Right ventricle myocardium superior (tissue), 1 donor: ENCODE measurements at regions of chr2 and their contacts with region 1.

Region 1: GRCh38 chr2:20635675-20636584 is 15.0 kb downstream of the HS1BP3 start:
- DNase-seq: peak; percentile 92
- ATAC-seq: peak; percentile 88

Region 2: GRCh38 chr2:20444161-20444992 is 191.6 kb before region 1 on chr2:
- intact Hi-C with region 1: loop called (anchors 2 kb)
- DNase-seq: no peak
- ATAC-seq: no peak

Region 3: DNA sequence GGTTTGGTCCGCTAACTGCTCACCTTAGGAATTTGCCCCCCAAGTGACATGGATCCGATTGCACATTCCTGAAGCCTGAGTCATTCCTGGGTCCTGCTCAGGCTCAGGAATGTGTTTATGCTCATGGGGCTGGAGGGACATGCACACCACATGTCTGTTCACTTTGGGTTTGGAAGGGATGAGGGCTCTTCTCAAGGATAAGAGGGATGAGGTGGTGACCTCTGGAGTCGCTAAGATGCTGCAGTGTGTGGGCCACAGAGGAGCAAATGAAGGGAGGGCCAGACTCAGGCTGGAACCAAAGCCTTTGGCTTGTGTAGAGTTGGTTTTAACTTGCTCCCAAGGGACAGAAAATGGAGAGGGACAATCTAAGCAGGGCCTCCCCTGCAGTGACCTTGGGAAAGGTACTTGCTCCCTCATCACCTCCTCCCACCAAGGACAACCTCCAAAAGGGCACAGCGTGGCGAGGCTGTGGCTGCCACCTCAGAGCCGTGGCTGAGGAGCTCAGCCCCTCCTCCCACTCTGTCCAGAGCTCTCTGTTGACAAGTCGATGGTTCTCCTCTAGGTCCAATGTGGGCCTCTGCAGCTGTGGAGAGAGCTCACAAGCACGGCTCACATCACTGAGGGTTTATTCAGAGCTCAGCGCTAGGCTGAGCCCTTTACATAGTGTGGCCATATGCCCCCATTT is 51.2 kb before region 1 on chr2:
- intact Hi-C with region 1: loop called (anchors 10 kb)
- DNase-seq: peak; percentile 24
- ATAC-seq: peak; percentile 61

Region 4: DNA sequence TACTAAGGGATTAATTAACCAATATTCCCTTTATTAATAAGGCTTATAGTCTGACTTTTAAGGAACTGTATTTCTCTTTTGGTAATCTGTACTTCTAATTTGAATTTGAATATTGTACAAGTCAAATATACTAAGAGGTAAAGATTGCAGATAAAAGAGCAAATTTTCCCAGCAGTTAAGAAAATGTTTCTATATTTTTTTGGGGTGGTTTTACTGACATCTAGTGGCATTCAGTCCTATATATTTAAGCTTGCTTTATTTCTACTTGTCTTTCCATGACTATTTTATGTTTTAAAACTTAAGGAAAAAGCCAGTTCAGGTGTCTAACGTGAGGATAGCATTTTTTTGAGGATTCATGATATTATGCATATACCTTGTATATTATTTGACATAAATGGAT is 529.4 kb after region 1 on chr2:
- intact Hi-C with region 1: no loop called
- DNase-seq: no peak
- ATAC-seq: no peak